GM18951 (cell line): ENCODE measurements at regions of chr10 and their contacts with region 1.

Region 1: DNA sequence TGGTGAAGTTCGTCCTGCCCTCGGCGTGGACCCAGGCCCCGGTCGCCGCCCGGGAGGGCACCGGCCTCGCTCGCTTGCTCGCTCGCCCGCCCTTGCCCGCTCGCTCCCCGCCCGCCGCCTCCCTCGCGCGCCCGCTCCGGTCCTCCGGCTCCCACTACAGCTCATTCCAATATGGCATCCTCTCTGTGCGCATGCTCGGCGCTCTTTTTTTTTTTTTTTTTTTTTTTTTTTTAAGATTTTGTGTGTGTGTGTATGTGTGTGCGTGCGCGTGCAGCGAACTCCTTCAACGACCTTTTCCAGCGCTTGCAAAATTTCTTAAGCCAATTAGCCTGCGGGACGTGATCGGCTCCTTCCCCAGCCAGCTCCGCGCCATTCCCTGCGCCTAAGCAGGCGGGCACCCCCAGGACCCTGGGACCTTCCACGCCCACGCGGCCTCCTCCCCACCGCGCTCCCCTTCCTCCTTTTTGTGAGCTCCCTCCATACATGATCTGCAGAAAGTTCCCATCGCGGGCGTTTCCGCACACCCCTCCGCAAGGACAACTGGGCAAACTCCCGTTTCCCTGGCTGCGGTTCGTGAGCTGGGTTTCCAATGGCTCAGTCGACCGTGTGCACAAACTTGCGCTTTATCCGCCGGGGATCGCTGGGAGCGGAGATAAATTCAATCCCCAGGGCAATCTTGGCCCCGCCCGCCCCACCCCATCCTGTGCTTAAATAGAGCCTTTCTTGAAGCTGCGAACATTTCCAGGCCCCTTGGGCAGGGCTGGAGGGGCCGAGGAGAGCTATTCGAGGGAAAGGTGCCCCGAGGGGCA is at the start of gene SFMBT2:
- POLR2A ChIP-seq: peak; percentile 67

Region 2: DNA sequence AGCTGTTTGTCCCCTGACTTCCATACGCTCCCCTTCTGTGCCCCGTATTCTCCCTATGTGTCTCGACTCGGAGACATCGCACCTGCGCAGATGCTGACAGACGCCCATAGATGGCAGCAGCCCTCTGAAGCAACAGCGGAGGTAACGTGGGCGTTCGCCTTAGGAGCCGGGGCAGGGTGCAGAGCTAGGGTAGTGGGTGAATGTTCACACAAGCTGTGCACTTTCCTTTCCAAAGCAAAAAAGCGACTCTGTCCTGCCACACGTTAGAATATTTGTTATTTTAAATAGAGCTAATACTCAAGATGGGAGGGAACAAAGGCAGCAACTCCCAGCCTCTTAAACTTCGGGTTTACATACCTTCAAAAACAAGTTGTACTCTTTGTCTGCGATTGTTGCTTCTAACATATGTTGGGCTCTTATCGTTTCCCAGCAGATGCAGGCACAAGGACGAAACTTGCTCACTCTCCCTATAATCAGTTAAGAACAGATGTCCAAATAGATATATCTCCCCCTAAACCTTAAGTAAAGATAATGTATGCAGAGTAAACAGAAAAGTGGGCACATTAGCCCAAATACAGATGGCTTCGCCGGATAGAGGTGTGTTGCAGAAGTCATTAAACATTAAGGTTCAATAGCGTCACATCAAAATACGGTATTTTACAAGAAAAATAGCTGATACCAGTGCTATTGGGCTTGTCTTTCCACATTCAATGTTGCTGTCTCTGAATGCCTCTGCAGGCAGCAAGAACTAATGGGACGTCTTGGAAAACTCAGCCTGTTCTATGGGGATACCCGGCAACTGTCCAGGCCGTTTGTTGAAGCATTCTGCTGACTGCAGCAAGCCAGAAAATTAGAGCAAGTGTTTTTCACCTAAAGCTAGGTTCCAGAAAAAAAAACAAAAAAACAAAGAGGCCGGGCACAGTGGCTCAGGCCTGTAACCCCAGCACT is 490.7 kb before region 1 on chr10:
- in situ Hi-C with region 1: loop called (anchors 10 kb)
- POLR2A ChIP-seq: no peak

Region 3: DNA sequence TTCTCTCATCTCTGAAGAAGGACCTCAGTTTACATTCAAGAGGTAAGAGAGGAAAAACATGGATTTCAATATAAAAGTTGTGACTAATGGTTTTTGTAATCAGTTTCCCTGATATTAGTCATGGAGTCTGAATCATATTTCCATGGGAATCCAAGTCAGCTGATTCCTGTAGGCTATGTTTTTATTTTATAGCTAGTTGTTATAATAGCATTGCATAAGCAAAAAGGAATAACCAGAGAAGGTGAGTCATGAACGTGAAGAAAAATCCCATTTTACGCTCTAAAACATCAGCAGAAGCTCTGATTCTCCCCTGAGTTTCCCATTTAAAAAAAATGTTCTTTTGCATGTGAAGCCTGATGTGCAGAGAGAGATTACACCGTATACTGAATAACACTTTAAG is 299.5 kb before region 1 on chr10:
- in situ Hi-C with region 1: loop called (anchors 10 kb)
- POLR2A ChIP-seq: no peak

Region 4: DNA sequence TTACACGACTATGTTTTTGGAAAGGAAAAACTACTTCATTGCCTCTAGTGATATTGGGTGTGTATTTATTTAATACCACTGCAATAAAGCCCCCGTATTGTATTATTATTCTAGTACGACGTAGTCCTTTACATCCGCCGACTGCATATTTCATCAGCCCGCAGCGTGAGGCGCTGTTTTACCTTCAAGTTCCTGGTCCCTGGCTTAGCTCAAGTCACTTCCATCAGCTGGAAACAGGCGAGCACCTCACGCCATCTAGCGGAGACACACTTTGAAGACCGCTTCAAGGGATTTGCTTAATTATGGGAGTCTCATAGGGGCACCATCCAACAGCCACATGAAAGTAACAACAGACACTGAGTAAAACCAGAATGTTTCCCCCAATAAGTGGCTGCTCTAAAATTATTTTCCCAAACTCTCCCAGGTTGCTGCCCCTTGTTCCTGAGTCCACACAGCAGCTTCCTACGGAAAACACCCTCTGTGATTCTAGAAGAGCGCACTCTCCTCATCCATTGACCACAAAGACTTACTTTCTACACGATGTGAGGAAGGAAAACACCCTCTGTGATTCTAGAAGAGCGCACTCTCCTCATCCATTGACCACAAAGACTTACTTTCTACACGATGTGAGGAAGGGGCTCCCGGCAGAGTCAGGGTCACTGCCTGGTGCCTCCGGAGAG is 276.3 kb after region 1 on chr10:
- in situ Hi-C with region 1: loop called (anchors 25 kb)
- POLR2A ChIP-seq: no peak

Region 5: GRCh38 chr10:7787857-7788638 is 377.0 kb after region 1 on chr10 and contains the starts of genes ATP5F1C and KIN:
- in situ Hi-C with region 1: no loop called
- POLR2A ChIP-seq: peak; percentile 96